ENCODE measurements at regions of chr5 and their contacts with region 1.

Region 1: GRCh38 chr5:73985145-73985544 is 359.1 kb downstream of the ARHGEF28 start:
- DNase-seq: peak; percentile 83
- H3K4me3 ChIP-seq: no peak overlapping the region
- H3K27ac ChIP-seq: peak overlapping the region; percentile 38
- H3K4me1 ChIP-seq: peaks cover 30% of the 10 kb centered on the region
- H3K27me3 ChIP-seq: no peaks in the 10 kb centered on the region
- CTCF ChIP-seq: peak; percentile 54 to 56

Region 2: GRCh38 chr5:74107899-74108298 is 122.8 kb after region 1 on chr5:
- CTCF ChIA-PET with region 1: no interaction called
- dilution Hi-C with region 1: no loop called
- in situ Hi-C with region 1: no loop called
- intact Hi-C with region 1: no loop called
- DNase-seq: no peak
- H3K4me3 ChIP-seq: no peak overlapping the region
- H3K27ac ChIP-seq: no peak overlapping the region
- H3K4me1 ChIP-seq: peaks cover 7% of the 10 kb centered on the region
- H3K27me3 ChIP-seq: no peaks in the 10 kb centered on the region
- CTCF ChIP-seq: no peak

Region 3: GRCh38 chr5:74648835-74649293 is 663.7 kb after region 1 on chr5:
- CTCF ChIA-PET with region 1: no interaction called
- dilution Hi-C with region 1: no loop called
- in situ Hi-C with region 1: no loop called
- intact Hi-C with region 1: loop called (anchors 1 kb)
- DNase-seq: no peak
- H3K4me3 ChIP-seq: no peak overlapping the region
- H3K27ac ChIP-seq: no peak overlapping the region
- H3K4me1 ChIP-seq: peaks cover 55% of the 10 kb centered on the region
- H3K27me3 ChIP-seq: no peaks in the 10 kb centered on the region
- CTCF ChIP-seq: peak; percentile 65 to 66